ENCODE measurements at regions of chr21 and their contacts with region 1.

Region 1: GRCh38 chr21:33199516-33200217 is 30.1 kb upstream of the IFNAR2 start:
- DNase-seq: peak; percentile 69 to 86
- ATAC-seq: peak; percentile 43 to 65
- H3K4me3 ChIP-seq: no peak overlapping the region
- H3K27ac ChIP-seq: peak overlapping the region; percentile 25 to 62; a peak in 4 of 6 replicates
- H3K4me1 ChIP-seq: peaks cover 36% of the 10 kb centered on the region
- CTCF ChIP-seq: peak; percentile 78
- EP300 ChIP-seq: no peak
- POLR2A ChIP-seq: no peak
- RAD21 ChIP-seq: peak; percentile 92 to 95

Region 2: DNA sequence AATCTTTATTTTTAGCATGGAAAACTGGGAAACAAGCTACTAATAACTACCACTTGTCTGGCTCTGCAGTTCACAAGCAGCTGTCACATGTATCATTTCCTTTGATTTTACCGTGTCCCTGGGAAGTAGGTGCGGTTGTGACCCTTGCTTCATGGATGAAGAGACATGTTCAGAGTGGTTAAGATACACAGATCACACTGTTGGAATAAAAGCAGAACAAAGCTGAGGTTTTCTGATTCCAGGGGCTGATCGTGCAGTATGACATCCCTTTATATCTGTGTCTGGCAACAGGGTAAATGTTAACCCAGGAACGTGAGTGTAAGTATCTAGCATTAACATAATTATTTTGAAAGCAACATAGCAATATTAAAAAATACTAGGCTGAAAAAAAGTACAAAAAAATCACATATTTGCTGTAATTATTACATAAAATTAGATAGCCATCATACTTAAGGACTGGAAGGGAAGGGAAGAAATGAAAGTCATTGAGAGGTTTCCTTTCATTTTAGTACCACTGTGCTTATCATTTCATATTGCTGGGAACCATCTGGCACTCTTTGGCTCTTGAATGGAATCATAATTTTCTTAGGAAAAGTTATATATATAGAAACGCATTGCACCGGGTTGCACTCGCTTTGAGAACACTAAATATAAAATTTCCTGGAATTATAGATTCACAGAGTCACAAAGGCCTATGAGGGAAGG is 365.3 kb before region 1 on chr21:
- CTCF ChIA-PET with region 1: interaction called, 24 read pairs
- POLR2A ChIA-PET with region 1: no interaction called
- DNase-seq: no peak
- ATAC-seq: no peak
- H3K4me3 ChIP-seq: no peak overlapping the region
- H3K27ac ChIP-seq: no peak overlapping the region
- H3K4me1 ChIP-seq: no peaks in the 10 kb centered on the region
- CTCF ChIP-seq: no peak
- EP300 ChIP-seq: no peak
- POLR2A ChIP-seq: no peak
- RAD21 ChIP-seq: no peak

Region 3: DNA sequence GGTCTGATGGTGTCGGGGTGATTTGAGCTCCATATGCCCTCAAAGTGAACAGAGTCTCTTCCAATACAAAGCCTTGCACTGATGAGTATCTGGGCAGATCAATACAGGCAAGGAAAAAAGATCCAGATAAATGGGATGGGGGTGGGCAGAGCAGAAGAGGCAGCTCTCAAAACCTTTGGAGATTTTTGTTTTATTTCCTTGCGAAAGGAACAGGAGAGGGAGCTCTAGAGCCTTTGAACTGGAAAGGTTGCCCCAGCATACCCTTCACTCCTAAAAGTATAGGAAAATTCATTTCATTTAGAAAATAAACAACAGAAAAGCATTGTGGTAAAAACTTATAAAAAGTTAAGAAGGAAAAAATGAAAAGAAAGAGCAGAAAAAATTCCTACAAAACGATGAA is 205.4 kb before region 1 on chr21:
- CTCF ChIA-PET with region 1: interaction called, 18 read pairs
- POLR2A ChIA-PET with region 1: no interaction called
- DNase-seq: no peak
- ATAC-seq: 0 out of 6 replicates have a peak, but pooled peaks of 1 of the 2 experiments have one; percentile 50
- H3K4me3 ChIP-seq: no peak overlapping the region
- H3K27ac ChIP-seq: no peak overlapping the region
- H3K4me1 ChIP-seq: no peaks in the 10 kb centered on the region
- CTCF ChIP-seq: peak; percentile 44
- EP300 ChIP-seq: no peak
- POLR2A ChIP-seq: no peak
- RAD21 ChIP-seq: peak; percentile 61 to 62

Region 4: DNA sequence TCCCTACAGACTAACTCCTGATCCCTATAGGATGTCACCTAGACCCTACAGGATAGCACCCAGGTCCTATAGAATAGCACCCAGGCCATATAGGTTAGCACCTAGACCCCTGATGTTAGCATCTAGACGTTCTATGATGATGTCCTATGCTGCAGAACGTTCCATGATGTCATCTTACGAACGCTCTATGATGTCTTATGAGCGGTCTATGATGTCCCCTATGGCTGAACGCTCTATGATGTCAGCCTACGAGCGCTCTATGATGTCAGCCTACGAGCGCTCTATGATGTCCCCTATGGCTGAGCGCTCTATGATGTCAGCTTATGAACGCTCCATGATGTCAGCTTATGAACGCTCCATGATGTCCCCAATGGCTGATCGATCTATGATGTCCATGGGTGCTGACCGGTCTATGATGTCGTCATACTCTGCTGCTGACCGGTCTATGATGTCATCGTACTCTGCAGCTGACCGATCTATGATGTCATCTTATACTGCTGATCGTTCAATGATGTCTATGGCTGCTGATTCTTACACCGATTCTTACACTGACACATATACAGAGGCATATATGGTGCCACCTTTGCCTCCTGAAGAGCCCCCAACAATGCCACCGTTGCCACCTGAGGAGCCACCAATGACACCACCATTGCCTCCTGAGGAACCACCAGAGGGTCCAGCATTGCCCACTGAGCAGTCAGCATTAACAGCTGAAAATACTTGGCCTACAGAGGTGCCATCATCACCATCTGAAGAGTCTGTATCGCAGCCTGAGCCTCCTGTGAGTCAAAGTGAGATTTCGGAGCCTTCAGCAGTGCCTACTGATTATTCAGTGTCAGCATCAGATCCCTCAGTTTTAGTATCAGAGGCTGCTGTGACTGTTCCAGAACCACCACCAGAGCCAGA is 352.7 kb after region 1 on chr21:
- CTCF ChIA-PET with region 1: no interaction called
- POLR2A ChIA-PET with region 1: no interaction called
- DNase-seq: no peak
- ATAC-seq: no peak; a peak in 2 of 6 replicates
- H3K4me3 ChIP-seq: no peak overlapping the region
- H3K27ac ChIP-seq: no peak overlapping the region
- H3K4me1 ChIP-seq: no peaks in the 10 kb centered on the region
- CTCF ChIP-seq: no peak
- EP300 ChIP-seq: no peak
- POLR2A ChIP-seq: no peak
- RAD21 ChIP-seq: no peak